Sciatic nerve (tissue), 2 donors: ENCODE measurements at regions of chr3 and their contacts with region 1.

Region 1: GRCh38 chr3:55893045-55893664 is 406.0 kb upstream of the WNT5A start:
- DNase-seq: no peak
- ATAC-seq: no peak

Region 2: DNA sequence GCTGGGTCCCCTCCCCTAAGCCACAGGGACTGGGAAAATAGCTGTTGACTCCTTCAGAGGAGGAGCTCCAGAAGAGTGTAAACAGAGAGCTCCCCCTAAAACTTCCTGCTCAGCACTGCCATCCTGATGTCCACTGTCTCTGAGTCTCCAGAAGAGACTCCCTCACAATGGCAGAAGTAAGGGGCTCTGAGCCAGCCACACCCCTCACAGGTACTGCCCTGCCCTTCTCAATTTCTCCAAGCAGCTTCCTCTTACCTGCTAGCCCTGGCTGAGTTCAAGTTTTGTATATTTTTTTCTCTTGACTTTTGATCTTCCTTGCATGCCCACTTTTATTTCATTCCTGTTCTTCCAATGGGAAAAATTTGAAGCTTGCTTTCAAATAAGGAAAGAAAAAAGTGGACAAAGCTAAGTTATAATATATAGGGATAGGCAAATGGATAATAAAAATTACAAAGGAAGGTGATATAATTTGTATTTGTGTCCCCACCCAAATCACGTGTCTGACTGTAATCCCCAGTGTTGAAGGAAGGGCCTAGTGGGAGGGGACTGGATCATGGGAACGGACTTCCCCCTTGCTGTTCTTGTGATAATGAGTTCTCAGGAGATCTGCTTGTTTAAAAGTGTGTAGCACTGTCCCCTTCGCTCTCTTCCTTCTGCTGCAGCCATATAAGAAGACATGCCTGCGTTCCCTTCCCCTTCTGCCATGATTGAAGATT is 36.2 kb after region 1 on chr3:
- intact Hi-C with region 1: no loop called
- DNase-seq: no peak
- ATAC-seq: no peak

Region 3: GRCh38 chr3:56025326-56025725 is 132.2 kb after region 1 on chr3:
- intact Hi-C with region 1: loop called (anchors 5 kb)
- DNase-seq: no peak
- ATAC-seq: no peak

Region 4: DNA sequence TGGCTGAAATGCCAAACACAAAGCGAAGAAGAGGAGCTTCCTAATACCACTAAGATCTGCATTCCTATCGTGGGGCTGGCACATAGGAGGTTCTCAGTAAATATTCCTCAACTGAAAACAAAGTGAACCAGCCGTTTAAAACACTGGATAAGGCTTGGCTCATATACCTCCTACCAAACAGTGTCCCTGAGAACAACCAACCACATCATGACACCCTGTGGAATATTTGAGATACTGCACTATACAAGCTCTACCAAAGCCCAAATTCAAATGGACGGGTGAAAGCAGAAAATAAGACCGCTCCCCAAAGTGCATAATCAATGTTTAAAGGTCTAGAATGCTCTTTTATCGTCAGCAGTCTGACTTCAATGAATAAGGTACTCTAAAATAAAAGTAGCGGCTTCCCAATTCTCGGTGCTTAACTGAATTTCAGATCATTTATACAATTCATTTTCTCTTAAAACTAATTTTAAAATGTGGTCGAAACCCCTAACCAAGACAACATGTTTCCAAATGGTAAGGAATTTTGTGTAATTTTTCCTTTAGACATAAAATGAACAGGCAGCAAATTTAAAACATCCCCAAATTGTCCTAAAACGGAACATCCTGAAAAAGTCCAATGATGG is 149.3 kb after region 1 on chr3:
- intact Hi-C with region 1: no loop called
- DNase-seq: no peak
- ATAC-seq: peak; percentile 79